ENCODE measurements at regions of chrX and their contacts with region 1.

Region 1: GRCh38 chrX:112935029-112935428 is 94.4 kb upstream of the AMOT start:
- DNase-seq: no peak
- ATAC-seq: no peak
- H3K4me3 ChIP-seq: no peak overlapping the region
- H3K27ac ChIP-seq: peak overlapping the region in 1 of 4 donors; percentile 35
- H3K4me1 ChIP-seq: no peaks in the 10 kb centered on the region
- H3K27me3 ChIP-seq: no peaks in the 10 kb centered on the region
- CTCF ChIP-seq: no peak
- POLR2A ChIP-seq: no peak

Region 2: GRCh38 chrX:112678831-112679230 is 256.2 kb before region 1 on chrX:
- in situ Hi-C with region 1: no loop called
- intact Hi-C with region 1: loop called (anchors 10 kb)
- DNase-seq: no peak
- ATAC-seq: no peak
- H3K4me3 ChIP-seq: no peak overlapping the region
- H3K27ac ChIP-seq: no peak overlapping the region
- H3K4me1 ChIP-seq: no peaks in the 10 kb centered on the region
- H3K27me3 ChIP-seq: no peaks in the 10 kb centered on the region
- CTCF ChIP-seq: no peak
- POLR2A ChIP-seq: no peak

Region 3: DNA sequence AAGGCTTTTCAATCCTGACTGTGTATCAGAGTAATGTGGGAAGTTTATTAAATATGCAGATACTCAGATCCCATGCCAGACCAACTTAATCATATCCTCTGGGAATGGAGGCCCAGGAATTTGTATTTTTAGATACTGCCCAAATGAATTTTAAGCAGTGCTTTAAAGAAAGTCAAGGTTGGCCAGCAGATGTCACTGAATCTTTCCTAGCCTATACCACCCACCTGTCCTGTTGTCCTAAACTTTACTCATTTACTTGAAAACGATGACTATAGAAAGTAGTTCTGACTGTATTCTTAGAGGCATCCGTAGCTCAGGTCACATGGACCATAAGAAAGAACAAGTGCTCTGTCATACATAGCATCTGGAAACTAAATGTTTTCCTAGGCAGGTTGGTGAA is 174.3 kb before region 1 on chrX:
- in situ Hi-C with region 1: no loop called
- intact Hi-C with region 1: loop called (anchors 10 kb)
- DNase-seq: no peak
- ATAC-seq: no peak
- H3K4me3 ChIP-seq: no peak overlapping the region
- H3K27ac ChIP-seq: no peak overlapping the region
- H3K4me1 ChIP-seq: peaks cover 0 to 3% of the 10 kb centered on the region in 2 donors
- H3K27me3 ChIP-seq: peaks cover 0 to 3% (median 0%) of the 10 kb centered on the region in 3 donors
- CTCF ChIP-seq: no peak
- POLR2A ChIP-seq: no peak

Region 4: DNA sequence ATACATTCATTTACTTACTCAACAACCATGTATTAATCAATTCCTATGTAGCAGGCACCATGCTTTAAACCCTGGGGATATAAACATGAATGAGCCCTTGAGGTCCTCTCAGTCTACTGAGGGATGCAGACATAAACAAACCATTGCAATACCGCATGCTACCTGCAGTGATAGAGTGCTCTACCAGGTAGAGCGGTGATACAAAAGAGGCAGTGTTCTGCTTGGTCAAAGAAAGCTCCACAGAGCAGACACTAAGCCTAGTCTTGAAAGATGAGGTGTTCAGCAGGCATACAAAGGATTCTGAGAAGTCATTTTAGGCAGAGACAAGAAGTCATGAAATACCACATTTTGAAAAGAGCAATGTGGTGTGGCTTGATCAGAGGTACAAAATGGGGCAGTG is 67.5 kb before region 1 on chrX:
- in situ Hi-C with region 1: no loop called
- intact Hi-C with region 1: no loop called
- DNase-seq: no peak
- ATAC-seq: no peak
- H3K4me3 ChIP-seq: no peak overlapping the region
- H3K27ac ChIP-seq: no peak overlapping the region
- H3K4me1 ChIP-seq: no peaks in the 10 kb centered on the region
- H3K27me3 ChIP-seq: no peaks in the 10 kb centered on the region
- CTCF ChIP-seq: no peak
- POLR2A ChIP-seq: no peak